ENCODE measurements at regions of chr1 and their contacts with region 1.

Region 1: DNA sequence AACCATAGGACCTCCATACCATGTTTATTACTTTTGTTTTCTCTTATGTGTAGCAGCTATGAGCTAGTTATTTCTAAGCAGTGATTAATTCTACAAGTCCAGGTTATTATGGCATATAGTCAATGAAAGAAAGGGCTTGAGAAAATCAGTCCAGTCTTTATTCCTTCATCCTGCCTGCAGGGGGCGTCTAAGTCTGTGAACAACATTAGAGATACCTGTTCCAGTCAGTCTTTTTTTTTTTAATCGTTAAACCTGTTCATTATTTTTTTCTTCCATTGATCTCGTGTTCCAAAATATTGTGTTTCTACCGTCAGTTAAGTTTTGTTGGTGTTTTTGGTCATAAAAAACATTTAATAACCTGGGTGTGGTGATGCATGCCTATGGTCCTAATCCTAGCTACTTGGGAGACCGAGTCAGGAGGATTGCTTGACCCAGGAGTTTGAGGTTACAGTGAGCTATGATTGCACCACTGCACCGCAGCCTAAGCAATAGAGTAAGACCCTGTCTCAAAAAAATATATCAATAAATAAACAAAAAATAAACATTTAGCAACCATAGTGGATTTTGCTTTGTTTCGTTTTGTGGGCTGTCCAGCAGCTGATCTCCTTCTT is 29.4 kb upstream of the CD2 start:
- DNase-seq: peak; percentile 92
- ATAC-seq: peak; percentile 84
- H3K4me3 Mint-ChIP-seq: no peak overlapping the region
- H3K27ac Mint-ChIP-seq: peak overlapping the region; percentile 28
- H3K4me1 Mint-ChIP-seq: peaks cover 34% of the 10 kb centered on the region
- H3K27me3 Mint-ChIP-seq: no peaks in the 10 kb centered on the region
- CTCF ChIP-seq: peak; percentile 90

Region 2: DNA sequence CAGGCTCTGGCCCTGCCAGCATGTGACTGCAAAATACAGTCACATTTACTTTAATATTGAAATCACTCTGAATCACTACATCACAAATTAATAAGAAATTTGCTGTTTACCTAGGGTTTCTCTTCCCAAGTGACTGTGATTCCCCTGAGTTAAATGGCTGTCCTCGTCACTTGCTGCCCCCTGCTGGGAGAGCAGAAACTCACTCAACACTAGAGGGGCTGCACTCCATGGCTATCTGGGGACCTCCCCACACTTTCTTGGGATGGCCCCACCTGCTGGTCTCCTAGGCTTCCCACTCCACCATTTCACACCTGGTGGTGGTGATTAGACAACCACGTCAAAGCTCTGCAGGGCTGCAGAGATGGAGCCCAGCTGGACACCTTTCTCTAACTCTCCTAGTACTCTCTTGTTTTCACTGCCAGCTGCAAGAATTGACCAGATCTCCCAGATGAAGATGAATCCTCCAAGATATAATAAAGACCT is 92.8 kb after region 1 on chr1:
- CTCF ChIA-PET with region 1: interaction called, 27 read pairs
- POLR2A ChIA-PET with region 1: no interaction called
- intact Hi-C with region 1: no loop called
- DNase-seq: peak; percentile 80
- ATAC-seq: peak; percentile 67
- H3K4me3 Mint-ChIP-seq: peak overlapping the region; percentile 52
- H3K27ac Mint-ChIP-seq: peak overlapping the region; percentile 96
- H3K4me1 Mint-ChIP-seq: peaks cover 52% of the 10 kb centered on the region
- H3K27me3 Mint-ChIP-seq: no peaks in the 10 kb centered on the region
- CTCF ChIP-seq: peak; percentile 95

Region 3: GRCh38 chr1:116826818-116827606 is 102.1 kb after region 1 on chr1:
- CTCF ChIA-PET with region 1: interaction called, 16 read pairs
- POLR2A ChIA-PET with region 1: no interaction called
- intact Hi-C with region 1: no loop called
- DNase-seq: peak; percentile 90
- ATAC-seq: peak; percentile 91
- H3K4me3 Mint-ChIP-seq: peak overlapping the region; percentile 76
- H3K27ac Mint-ChIP-seq: peak overlapping the region; percentile 97
- H3K4me1 Mint-ChIP-seq: peaks cover 55% of the 10 kb centered on the region
- H3K27me3 Mint-ChIP-seq: no peaks in the 10 kb centered on the region
- CTCF ChIP-seq: no peak

Region 4: DNA sequence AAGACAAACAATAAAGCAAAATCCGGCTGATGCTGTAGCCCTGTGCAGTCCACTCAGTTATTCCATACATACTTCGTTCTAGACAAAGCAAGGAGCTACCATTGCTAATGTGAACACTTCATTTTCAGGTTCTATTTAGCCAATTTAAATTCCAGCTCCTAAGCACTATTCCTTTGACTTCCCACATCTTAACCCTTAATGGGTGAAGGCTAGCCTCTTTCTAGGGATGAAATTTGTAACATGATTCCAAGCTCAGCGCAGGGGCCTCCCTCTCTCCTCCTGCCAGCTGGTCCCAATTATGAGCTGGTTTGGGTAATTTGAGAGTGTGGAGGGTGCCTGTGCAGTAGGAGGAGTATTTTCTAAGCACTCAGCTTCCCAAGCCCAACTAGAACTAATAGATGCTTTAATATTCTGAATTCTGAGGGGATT is 130.9 kb after region 1 on chr1:
- CTCF ChIA-PET with region 1: interaction called, 10 read pairs
- POLR2A ChIA-PET with region 1: no interaction called
- intact Hi-C with region 1: no loop called
- DNase-seq: no peak
- ATAC-seq: no peak
- H3K4me3 Mint-ChIP-seq: no peak overlapping the region
- H3K27ac Mint-ChIP-seq: no peak overlapping the region
- H3K4me1 Mint-ChIP-seq: peaks cover 16% of the 10 kb centered on the region
- H3K27me3 Mint-ChIP-seq: no peaks in the 10 kb centered on the region
- CTCF ChIP-seq: no peak

Region 5: GRCh38 chr1:117067533-117068370 is 342.9 kb after region 1 on chr1:
- CTCF ChIA-PET with region 1: interaction called, 23 read pairs
- POLR2A ChIA-PET with region 1: no interaction called
- intact Hi-C with region 1: no loop called
- DNase-seq: peak; percentile 42
- ATAC-seq: peak; percentile 83
- H3K4me3 Mint-ChIP-seq: no peak overlapping the region
- H3K27ac Mint-ChIP-seq: no peak overlapping the region
- H3K4me1 Mint-ChIP-seq: peaks cover 40% of the 10 kb centered on the region
- H3K27me3 Mint-ChIP-seq: no peaks in the 10 kb centered on the region
- CTCF ChIP-seq: peak; percentile 62